ENCODE measurements at regions of chr13 and their contacts with region 1.

Region 1: DNA sequence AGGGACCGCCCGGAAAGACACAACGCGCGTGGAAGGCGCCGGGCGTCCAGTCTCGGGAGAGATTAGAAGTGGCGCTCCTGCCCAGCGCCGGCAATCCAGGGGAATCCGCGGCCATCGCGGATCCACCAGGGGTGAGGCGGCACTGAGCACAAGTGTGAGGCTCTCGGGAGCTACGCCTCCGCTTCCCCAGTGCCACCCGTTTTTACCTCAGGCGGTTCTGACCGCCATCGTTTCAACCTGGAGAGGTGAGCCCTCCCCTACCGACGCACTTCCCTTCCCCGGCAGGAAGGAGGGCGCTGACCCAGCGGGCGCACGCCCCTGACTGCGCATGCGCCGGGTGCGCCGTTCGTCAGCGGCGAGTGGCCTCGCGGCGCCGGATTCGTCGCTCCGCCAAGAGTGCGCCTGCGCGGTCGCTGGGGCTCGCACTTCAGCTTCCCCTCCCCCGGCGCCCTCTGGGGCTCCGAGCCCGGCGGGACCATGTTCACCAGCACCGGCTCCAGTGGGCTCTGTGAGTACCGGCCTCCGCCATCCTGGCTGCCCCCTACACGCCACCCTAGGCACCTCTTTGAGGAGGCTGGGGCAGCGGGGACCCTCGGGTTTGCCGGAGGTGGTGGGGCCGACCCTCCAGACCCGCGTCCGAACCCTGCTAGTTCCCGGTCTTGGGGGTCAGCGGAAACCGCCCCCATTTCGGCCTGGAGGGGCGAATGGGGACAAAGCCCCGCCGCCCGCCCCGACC is at the start of gene UBAC2:
- DNase-seq: peak; percentile 96
- H3K4me3 Mint-ChIP-seq: peak within 1 kb of the TSS; percentile 87
- H3K27ac Mint-ChIP-seq: peak within 1 kb of the TSS; percentile 92
- H3K4me1 Mint-ChIP-seq: peaks cover 66% of the 10 kb centered on the region
- H3K27me3 Mint-ChIP-seq: no peaks in the 10 kb centered on the region
- total RNA-seq, gene UBAC2: 67.8 to 70.5 TPM

Region 2: DNA sequence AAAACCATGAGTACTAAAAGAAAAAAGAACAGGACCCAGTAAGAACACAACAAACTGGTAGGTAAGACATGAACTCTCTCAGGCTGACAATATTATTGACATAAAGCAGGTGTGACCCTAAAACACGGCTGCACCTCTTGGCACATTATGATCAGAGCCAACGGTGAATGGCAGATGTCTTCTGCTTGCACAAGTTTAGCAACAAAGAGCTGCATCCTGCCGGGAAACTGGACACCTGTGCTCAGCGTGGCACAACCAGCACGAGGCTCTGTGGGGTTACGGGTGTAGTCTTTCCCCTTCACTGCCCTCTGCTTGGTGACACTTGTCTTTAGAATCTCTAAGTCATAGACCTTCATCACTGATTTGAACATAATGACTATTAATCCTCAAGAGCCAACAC is 320.6 kb before region 1 on chr13:
- CTCF ChIA-PET with region 1: no interaction called
- POLR2A ChIA-PET with region 1: no interaction called
- DNase-seq: no peak
- H3K4me3 Mint-ChIP-seq: no peak overlapping the region
- H3K27ac Mint-ChIP-seq: no peak overlapping the region
- H3K4me1 Mint-ChIP-seq: peaks cover 18% of the 10 kb centered on the region
- H3K27me3 Mint-ChIP-seq: no peaks in the 10 kb centered on the region

Region 3: GRCh38 chr13:99176309-99177276 is 24.0 kb before region 1 on chr13:
- CTCF ChIA-PET with region 1: interaction called, 10 read pairs
- POLR2A ChIA-PET with region 1: no interaction called
- DNase-seq: peak; percentile 82
- H3K4me3 Mint-ChIP-seq: no peak overlapping the region
- H3K27ac Mint-ChIP-seq: no peak overlapping the region
- H3K4me1 Mint-ChIP-seq: peaks cover 40% of the 10 kb centered on the region
- H3K27me3 Mint-ChIP-seq: peaks cover 2% of the 10 kb centered on the region

Region 4: GRCh38 chr13:99214232-99214631 is 13.6 kb after region 1 on chr13:
- CTCF ChIA-PET with region 1: interaction called, 13 read pairs
- POLR2A ChIA-PET with region 1: interaction called, 3 read pairs
- DNase-seq: no peak
- H3K4me3 Mint-ChIP-seq: peak overlapping the region; percentile 81
- H3K27ac Mint-ChIP-seq: peak overlapping the region; percentile 95
- H3K4me1 Mint-ChIP-seq: peaks cover 77% of the 10 kb centered on the region
- H3K27me3 Mint-ChIP-seq: no peaks in the 10 kb centered on the region

Region 5: GRCh38 chr13:99258210-99258860 is 57.7 kb after region 1 on chr13 and contains the start of gene GPR18:
- CTCF ChIA-PET with region 1: interaction called, 15 read pairs
- POLR2A ChIA-PET with region 1: interaction called, 13 read pairs
- DNase-seq: peak; percentile 60
- H3K4me3 Mint-ChIP-seq: peak within 1 kb of the TSS; percentile 87
- H3K27ac Mint-ChIP-seq: peak within 1 kb of the TSS; percentile 91
- H3K4me1 Mint-ChIP-seq: peaks cover 67% of the 10 kb centered on the region
- H3K27me3 Mint-ChIP-seq: no peaks in the 10 kb centered on the region
- total RNA-seq, gene GPR18: 19.7 to 25.4 TPM

Region 6: GRCh38 chr13:99322297-99323103 is 121.9 kb after region 1 on chr13:
- CTCF ChIA-PET with region 1: no interaction called
- POLR2A ChIA-PET with region 1: no interaction called
- DNase-seq: peak; percentile 54
- H3K4me3 Mint-ChIP-seq: peak overlapping the region; percentile 47
- H3K27ac Mint-ChIP-seq: peak overlapping the region; percentile 90
- H3K4me1 Mint-ChIP-seq: peaks cover 64% of the 10 kb centered on the region
- H3K27me3 Mint-ChIP-seq: no peaks in the 10 kb centered on the region

Measured in activated CD4-positive, alpha-beta T cell treated with anti-CD3 and anti-CD28 coated beads, Interleukin-2, amount 10 ng/mL, durations not matched to agents 7 days and 5 days (primary cell).